Right cardiac atrium (tissue), 5 donors: ENCODE measurements at regions of chr9 and their contacts with region 1.

Region 1: DNA sequence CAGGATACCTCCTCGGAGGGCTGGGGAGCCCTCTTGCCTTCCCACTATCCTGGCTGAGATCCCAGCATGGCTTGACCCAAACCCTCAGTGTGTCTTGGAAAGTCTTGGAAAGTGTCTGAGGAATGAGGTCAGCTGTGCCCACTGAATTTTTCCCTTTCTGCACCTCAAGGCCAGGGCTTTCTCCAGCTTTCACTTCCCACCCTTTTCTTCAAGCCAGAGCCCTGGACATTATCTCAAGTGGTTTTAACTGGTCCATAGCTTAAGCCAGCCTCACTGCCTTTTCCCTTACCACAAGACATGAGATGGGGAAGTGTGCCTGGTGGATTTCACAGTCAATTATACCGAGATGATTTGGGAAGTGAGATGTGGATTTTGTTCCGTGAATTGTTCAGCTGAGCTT is 35.7 kb upstream of the LHX2 start:
- DNase-seq: no peak
- ATAC-seq: no peak
- H3K4me3 ChIP-seq: no peak overlapping the region
- H3K27ac ChIP-seq: no peak overlapping the region
- H3K4me1 ChIP-seq: no peaks in the 10 kb centered on the region
- H3K27me3 ChIP-seq: no peaks in the 10 kb centered on the region

Region 2: GRCh38 chr9:123988311-123989049 is 12.6 kb after region 1 on chr9:
- intact Hi-C with region 1: loop called in 1 of 4 experiments (anchors 2 kb)
- DNase-seq: no peak
- ATAC-seq: no peak
- H3K4me3 ChIP-seq: no peak overlapping the region
- H3K27ac ChIP-seq: no peak overlapping the region
- H3K4me1 ChIP-seq: no peaks in the 10 kb centered on the region
- H3K27me3 ChIP-seq: peaks cover 7% of the 10 kb centered on the region

Region 3: DNA sequence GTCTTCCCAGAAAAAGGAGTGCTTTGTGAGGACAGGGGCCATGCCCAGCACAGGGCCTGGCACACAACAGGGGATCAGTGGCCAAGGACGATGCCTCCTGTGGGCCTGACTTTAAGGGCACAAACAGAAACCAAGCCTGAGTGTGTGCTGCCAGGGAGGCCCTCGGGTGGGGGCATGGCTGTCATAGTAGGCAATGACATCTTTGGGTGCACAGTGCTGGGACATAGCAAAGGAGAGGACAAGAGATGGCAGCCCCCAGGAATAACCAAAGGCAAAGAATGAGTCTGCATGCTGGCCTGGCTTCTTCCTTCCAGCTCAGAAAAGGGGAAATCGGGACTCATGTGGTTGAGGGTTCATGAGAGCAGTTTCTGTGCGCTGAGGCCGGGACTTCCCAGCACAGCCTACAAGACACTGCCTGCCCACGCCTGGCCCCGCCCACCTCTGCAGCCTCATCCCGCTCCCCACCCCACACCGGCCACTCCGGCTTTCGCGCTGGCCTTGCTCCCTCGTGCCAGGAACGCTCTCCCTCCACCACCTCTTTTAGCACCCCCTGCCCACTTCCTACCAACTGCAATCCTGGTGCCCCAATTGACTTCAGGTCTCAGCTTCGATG is 21.9 kb after region 1 on chr9:
- intact Hi-C with region 1: loop called in 1 of 4 experiments (anchors 2 kb)
- DNase-seq: peak in 2 of 3 donors; percentile 61 to 83
- ATAC-seq: peak; percentile 67 to 69
- H3K4me3 ChIP-seq: no peak overlapping the region
- H3K27ac ChIP-seq: no peak overlapping the region
- H3K4me1 ChIP-seq: no peaks in the 10 kb centered on the region
- H3K27me3 ChIP-seq: no peaks in the 10 kb centered on the region